CD8-positive, alpha-beta T cell (primary cell): ENCODE measurements at regions of chrX and their contacts with region 1.

Region 1: DNA sequence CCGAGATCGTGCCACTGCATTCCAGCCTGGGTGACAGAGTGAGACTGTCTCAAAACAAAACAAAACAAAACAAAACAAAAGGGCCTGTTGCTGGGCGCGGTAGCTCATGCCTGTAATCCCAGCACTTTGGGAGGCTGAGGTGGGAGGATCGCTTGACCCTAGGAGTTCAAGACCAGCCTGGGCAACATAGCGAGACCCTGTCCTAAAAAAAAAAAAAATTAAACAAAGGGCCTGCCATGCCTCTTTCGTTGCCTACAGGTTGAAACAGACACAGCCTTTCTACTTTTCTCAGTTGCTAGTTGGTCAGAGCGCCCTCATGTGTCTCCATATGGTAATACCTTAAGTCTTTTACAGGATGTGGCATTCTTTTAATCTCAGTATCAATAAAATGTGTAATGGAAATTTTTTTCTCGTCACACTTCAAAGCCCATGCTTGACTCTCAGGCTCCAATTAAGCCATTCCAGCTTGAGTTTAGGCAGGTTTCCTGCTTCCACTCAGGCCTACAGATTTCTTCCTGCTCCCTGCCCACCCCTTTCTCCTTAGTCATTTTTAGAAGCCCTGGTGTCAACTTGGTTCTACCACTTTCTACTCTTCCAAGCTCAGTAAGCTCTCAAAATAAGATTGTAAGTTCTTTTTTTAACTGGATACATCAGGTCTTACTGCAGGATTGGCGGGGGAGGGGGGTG is 4.7 kb upstream of the SOWAHD start:
- DNase-seq: peak in 8 of 9 experiments; percentile 15 to 88 (median 56)
- ATAC-seq: peak; percentile 64
- H3K4me3 ChIP-seq: no peak overlapping the region
- H3K4me3 Mint-ChIP-seq: peak overlapping the region; percentile 61
- H3K27ac ChIP-seq: peak overlapping the region; percentile 37 to 77
- H3K27ac Mint-ChIP-seq: peak overlapping the region; percentile 97
- H3K4me1 ChIP-seq: peaks cover 44% of the 10 kb centered on the region
- H3K4me1 Mint-ChIP-seq: peaks cover 47% of the 10 kb centered on the region
- H3K27me3 ChIP-seq: no peaks in the 10 kb centered on the region
- H3K27me3 Mint-ChIP-seq: no peaks in the 10 kb centered on the region
- CTCF ChIP-seq: peak; percentile 58

Region 2: GRCh38 chrX:119638725-119639471 is 114.8 kb before region 1 on chrX:
- CTCF ChIA-PET with region 1: no interaction called
- POLR2A ChIA-PET with region 1: no interaction called
- intact Hi-C with region 1: no loop called
- DNase-seq: no peak
- ATAC-seq: no peak
- H3K4me3 ChIP-seq: no peak overlapping the region
- H3K4me3 Mint-ChIP-seq: no peak overlapping the region
- H3K27ac ChIP-seq: no peak overlapping the region
- H3K27ac Mint-ChIP-seq: peak overlapping the region; percentile 37
- H3K4me1 ChIP-seq: no peaks in the 10 kb centered on the region
- H3K4me1 Mint-ChIP-seq: peaks cover 33% of the 10 kb centered on the region
- H3K27me3 ChIP-seq: no peaks in the 10 kb centered on the region
- H3K27me3 Mint-ChIP-seq: no peaks in the 10 kb centered on the region
- CTCF ChIP-seq: no peak

Region 3: DNA sequence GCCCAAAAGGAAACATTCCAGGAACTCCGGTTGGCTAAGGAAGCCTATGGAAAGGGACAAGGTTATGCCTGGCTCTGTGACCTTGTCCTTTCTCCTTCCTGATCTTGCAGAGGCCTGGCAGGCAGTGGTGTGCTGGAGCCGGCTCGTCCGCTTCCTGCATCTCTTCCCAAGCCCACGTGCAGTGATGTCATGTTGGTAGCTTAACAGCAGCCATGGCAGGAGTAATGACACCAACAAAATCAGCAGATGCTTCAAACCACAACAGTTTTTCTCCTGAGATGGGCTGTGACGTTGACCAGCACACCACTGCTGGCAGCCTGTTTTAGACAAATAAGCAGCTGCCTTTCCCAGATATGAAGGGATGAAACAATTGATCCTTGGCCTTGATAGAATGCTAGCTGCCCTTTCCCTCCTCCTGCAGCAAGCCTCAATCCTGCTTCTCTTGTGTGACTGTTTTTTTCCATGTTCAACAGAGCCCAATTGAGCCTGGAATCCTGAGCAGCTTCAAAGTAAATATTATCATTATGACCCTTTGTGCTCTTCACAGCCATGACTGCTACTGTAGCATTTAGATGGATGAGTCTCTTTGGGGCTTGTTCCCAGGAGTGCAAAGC is 84.2 kb before region 1 on chrX:
- CTCF ChIA-PET with region 1: no interaction called
- POLR2A ChIA-PET with region 1: interaction called, 11 read pairs
- intact Hi-C with region 1: no loop called
- DNase-seq: no peak
- ATAC-seq: no peak
- H3K4me3 ChIP-seq: no peak overlapping the region
- H3K4me3 Mint-ChIP-seq: no peak overlapping the region
- H3K27ac ChIP-seq: no peak overlapping the region
- H3K27ac Mint-ChIP-seq: peak overlapping the region; percentile 49
- H3K4me1 ChIP-seq: peaks cover 26% of the 10 kb centered on the region
- H3K4me1 Mint-ChIP-seq: peaks cover 37% of the 10 kb centered on the region
- H3K27me3 ChIP-seq: no peaks in the 10 kb centered on the region
- H3K27me3 Mint-ChIP-seq: no peaks in the 10 kb centered on the region
- CTCF ChIP-seq: no peak

Region 4: GRCh38 chrX:119676949-119677653 is 76.6 kb before region 1 on chrX:
- CTCF ChIA-PET with region 1: interaction called, 3 read pairs
- POLR2A ChIA-PET with region 1: interaction called, 11 read pairs
- intact Hi-C with region 1: loop called (anchors 5 kb)
- DNase-seq: no peak
- ATAC-seq: peak; percentile 3
- H3K4me3 ChIP-seq: peak overlapping the region; percentile 24 to 41
- H3K4me3 Mint-ChIP-seq: peak overlapping the region; percentile 81
- H3K27ac ChIP-seq: peak overlapping the region; percentile 42 to 77
- H3K27ac Mint-ChIP-seq: peak overlapping the region; percentile 93
- H3K4me1 ChIP-seq: peaks cover 68% of the 10 kb centered on the region
- H3K4me1 Mint-ChIP-seq: peaks cover 59% of the 10 kb centered on the region
- H3K27me3 ChIP-seq: no peaks in the 10 kb centered on the region
- H3K27me3 Mint-ChIP-seq: no peaks in the 10 kb centered on the region
- CTCF ChIP-seq: no peak

Region 5: GRCh38 chrX:119698845-119699244 is 54.9 kb before region 1 on chrX:
- CTCF ChIA-PET with region 1: interaction called, 6 read pairs
- POLR2A ChIA-PET with region 1: interaction called, 10 read pairs
- intact Hi-C with region 1: loop called in 1 of 2 experiments (anchors 5 kb)
- DNase-seq: peak in 3 of 9 experiments; percentile 20 to 70 (median 60)
- ATAC-seq: peak; percentile 40
- H3K4me3 ChIP-seq: no peak overlapping the region
- H3K4me3 Mint-ChIP-seq: no peak overlapping the region
- H3K27ac ChIP-seq: no peak overlapping the region
- H3K27ac Mint-ChIP-seq: no peak overlapping the region
- H3K4me1 ChIP-seq: peaks cover 1% of the 10 kb centered on the region
- H3K4me1 Mint-ChIP-seq: peaks cover 5% of the 10 kb centered on the region
- H3K27me3 ChIP-seq: no peaks in the 10 kb centered on the region
- H3K27me3 Mint-ChIP-seq: no peaks in the 10 kb centered on the region
- CTCF ChIP-seq: peak; percentile 55

Region 6: DNA sequence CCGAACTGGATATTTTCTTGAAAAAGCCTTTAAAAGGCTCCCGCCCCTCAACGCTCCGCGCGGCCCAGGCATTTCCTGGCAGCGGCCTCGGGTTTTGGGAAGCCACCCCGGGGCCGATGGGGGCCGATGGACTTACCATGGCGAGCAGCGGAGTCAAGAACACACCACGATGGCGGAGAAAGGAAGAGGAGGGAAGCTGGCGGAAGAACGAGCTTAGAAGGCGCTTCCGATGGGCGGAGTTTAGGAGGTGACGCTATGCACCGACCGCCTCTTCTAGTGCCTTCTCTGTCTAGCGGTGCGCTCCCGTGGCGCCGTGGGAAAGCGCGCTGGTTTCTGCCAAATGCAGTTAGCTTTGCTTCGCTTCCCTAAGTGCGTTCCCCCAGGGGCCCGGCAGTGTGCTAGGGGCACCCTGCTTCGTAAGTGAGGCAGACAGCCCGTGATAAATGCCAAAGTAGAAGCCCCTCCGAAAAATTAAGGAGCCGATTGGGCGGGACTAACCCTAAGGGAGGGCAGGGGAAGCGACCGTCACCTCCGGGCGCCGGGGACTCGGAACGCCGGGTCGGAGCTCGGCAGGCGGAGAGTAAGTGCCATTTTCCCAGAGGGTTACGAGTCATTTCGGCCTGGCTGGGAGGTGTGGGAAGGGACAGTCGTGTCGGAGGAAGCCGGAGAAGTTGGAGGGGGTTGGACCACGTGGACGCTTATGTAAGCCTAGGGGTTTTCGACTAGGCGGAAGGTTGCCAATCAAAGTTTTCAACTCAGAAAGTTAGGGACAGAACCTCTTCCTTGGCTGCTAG is 37.9 kb after region 1 on chrX and contains the start of gene RPL39:
- CTCF ChIA-PET with region 1: interaction called, 4 read pairs
- POLR2A ChIA-PET with region 1: interaction called, 28 read pairs
- intact Hi-C with region 1: loop called in 1 of 2 experiments (anchors 1 kb)
- DNase-seq: peak; percentile 57 to 93 (median 78)
- ATAC-seq: peak; percentile 90
- H3K4me3 ChIP-seq: peak within 1 kb of the TSS; percentile 84 to 97
- H3K4me3 Mint-ChIP-seq: peak within 1 kb of the TSS; percentile 97
- H3K27ac ChIP-seq: peak within 1 kb of the TSS; percentile 88 to 98
- H3K27ac Mint-ChIP-seq: peak within 1 kb of the TSS; percentile 98
- H3K4me1 ChIP-seq: peaks cover 31% of the 10 kb centered on the region
- H3K4me1 Mint-ChIP-seq: peaks cover 44% of the 10 kb centered on the region
- H3K27me3 ChIP-seq: no peaks in the 10 kb centered on the region
- H3K27me3 Mint-ChIP-seq: no peaks in the 10 kb centered on the region
- CTCF ChIP-seq: no peak
- total RNA-seq, gene RPL39: 4,125 to 4,338 TPM

Region 7: DNA sequence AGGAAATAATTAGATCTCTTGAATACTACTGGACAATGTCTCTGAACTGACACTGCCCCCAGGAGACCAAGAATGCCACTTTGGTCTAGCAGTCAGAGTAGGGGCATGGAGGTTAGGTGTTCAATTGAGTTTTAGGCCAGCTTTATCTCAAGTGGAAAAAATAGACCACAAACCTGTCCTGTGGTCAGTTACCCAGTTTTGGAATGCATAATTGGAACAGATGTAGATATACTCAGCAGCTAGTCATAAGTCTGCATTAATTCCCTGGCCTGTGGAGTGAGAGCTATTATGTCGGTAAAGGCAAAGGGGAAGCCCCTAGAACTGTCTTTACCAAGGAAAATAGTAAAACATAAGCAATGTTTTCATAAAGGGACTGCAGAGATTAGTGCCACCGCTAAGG is 1881.4 kb after region 1 on chrX:
- CTCF ChIA-PET with region 1: no interaction called
- POLR2A ChIA-PET with region 1: no interaction called
- intact Hi-C with region 1: no loop called
- DNase-seq: no peak
- ATAC-seq: no peak
- H3K4me3 ChIP-seq: no peak overlapping the region
- H3K4me3 Mint-ChIP-seq: no peak overlapping the region
- H3K27ac ChIP-seq: no peak overlapping the region
- H3K27ac Mint-ChIP-seq: no peak overlapping the region
- H3K4me1 ChIP-seq: no peaks in the 10 kb centered on the region
- H3K4me1 Mint-ChIP-seq: no peaks in the 10 kb centered on the region
- H3K27me3 ChIP-seq: no peaks in the 10 kb centered on the region
- H3K27me3 Mint-ChIP-seq: no peaks in the 10 kb centered on the region
- CTCF ChIP-seq: no peak